MCF 10A (cell line): ENCODE measurements at regions of chr14 and their contacts with region 1.

Region 1: DNA sequence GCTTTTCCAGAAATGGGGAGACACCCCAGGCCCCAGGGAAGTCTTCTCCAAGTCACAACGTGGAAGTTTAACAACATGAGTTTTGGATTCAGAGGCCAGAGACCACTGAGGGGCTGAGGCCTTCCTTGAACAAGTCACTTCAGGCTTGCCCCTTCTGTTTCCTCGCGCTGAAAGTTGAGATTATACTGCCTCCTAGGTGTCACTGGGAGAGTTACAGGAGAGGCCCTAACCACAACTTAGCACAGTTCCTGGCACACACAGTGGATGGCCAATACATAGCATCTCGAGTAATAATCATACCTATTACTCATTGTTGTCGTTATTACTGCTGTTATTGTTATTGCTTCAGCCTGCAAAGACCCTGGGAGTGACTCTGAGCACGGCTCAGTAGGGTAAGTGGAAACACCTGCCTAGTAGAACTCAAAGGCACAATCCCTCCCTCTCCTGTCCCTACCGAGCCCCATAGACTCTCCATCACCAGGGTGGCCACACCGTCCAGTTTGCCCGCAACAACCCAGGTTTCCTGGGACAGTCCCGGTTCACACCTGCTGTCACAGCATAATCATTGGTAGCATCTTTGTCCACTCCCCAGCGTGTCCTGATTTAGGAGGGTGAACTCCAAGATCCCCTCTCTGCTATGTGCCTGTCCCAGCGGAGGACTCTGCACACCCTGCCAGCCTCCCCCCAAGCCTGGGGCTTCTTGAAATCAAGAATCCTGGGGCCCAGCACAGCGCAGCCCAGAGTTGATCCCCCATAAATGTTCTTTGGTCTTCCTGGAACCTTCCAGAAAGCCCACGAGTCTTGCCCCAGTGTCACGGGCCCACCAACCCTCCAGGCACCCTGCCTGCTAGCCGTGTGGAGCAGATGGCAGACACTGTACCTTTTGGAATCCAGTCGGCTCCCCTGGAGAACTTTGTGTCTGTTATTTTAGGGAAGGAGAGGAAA is 85.0 kb downstream of the SYNE3 start:
- DNase-seq: peak; percentile 48
- H3K4me3 Mint-ChIP-seq: no peak overlapping the region
- H3K27ac Mint-ChIP-seq: peak overlapping the region; percentile 63
- H3K4me1 Mint-ChIP-seq: peaks cover 6% of the 10 kb centered on the region
- H3K27me3 Mint-ChIP-seq: no peaks in the 10 kb centered on the region
- CTCF ChIP-seq: peak; percentile 46

Region 2: DNA sequence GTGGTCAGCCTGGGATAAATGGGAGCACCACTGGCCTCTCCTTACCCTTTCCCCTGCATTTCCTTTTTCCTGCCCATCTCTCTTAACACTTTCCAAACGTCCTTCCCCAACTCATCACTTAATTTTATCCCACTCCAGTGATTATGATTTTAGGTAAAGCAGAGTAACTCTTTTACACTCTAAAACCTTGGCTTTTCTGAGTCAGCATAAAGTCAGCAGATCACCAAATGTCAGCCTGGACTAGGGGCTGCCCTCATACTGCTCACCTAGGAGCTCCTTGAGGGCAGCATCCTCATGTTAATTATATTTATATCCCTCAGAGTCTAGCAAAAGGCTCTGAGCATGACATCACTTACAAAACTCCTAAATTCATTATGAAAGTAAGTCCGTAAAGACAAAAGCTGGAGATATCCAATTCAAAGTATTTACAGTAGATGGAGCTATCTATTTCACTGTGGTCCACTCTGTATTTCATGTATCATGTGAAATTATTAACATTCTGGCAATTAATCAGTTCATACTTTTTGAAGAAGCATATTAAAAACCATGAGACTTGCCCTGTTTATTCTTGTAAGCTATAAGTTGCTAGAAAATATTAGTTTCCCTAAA is 257.2 kb before region 1 on chr14:
- CTCF ChIA-PET with region 1: interaction called, 13 read pairs
- POLR2A ChIA-PET with region 1: no interaction called
- intact Hi-C with region 1: loop called (anchors 2 kb)
- DNase-seq: no peak
- H3K4me3 Mint-ChIP-seq: no peak overlapping the region
- H3K27ac Mint-ChIP-seq: no peak overlapping the region
- H3K4me1 Mint-ChIP-seq: no peaks in the 10 kb centered on the region
- H3K27me3 Mint-ChIP-seq: no peaks in the 10 kb centered on the region
- CTCF ChIP-seq: peak; percentile 39

Region 3: GRCh38 chr14:95808371-95808770 is 376.9 kb after region 1 on chr14:
- CTCF ChIA-PET with region 1: no interaction called
- POLR2A ChIA-PET with region 1: no interaction called
- intact Hi-C with region 1: no loop called
- DNase-seq: no peak
- H3K4me3 Mint-ChIP-seq: no peak overlapping the region
- H3K27ac Mint-ChIP-seq: no peak overlapping the region
- H3K4me1 Mint-ChIP-seq: no peaks in the 10 kb centered on the region
- H3K27me3 Mint-ChIP-seq: peaks cover 39% of the 10 kb centered on the region
- CTCF ChIP-seq: no peak